MCF 10A (cell line): ENCODE measurements at regions of chr1 and their contacts with region 1.

Region 1: DNA sequence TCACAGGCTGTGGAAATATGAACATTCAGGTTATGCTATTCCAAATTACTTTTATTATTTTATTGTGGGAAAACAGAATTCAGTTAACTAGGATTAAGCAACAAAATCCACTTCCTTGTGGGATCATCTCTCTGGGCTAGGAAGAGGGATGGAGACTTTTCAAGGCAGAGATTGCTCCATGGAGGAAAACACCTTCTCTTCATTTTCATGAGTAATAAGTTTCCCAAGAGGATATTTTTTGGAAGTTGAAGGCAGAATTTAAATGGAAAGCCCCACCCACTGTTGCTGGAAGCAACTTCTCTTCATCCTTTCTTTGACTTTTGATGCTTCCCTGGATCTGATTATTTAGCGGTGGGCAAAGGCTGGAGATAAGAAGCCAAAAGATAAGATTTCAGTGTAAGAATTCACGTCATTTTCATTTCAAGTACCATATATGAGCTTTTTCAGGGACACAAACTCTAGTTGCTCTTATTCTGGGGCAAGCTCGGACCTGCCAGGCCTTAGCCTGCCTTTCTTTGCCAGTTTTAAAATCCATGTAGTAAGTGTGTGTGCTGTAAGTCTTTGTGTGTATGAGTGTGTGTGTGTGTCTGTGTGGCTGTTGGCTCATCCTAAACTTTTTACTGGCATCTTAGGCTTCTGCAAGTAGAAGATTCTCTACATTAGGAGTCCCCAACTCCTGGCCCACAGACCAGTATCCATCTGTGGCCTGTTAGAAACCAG is 11.7 kb upstream of the IL24 start:
- DNase-seq: peak; percentile 90
- H3K4me3 Mint-ChIP-seq: peak overlapping the region; percentile 5
- H3K27ac Mint-ChIP-seq: peak overlapping the region; percentile 58
- H3K4me1 Mint-ChIP-seq: peaks cover 66% of the 10 kb centered on the region
- H3K27me3 Mint-ChIP-seq: no peaks in the 10 kb centered on the region
- CTCF ChIP-seq: no peak

Region 2: DNA sequence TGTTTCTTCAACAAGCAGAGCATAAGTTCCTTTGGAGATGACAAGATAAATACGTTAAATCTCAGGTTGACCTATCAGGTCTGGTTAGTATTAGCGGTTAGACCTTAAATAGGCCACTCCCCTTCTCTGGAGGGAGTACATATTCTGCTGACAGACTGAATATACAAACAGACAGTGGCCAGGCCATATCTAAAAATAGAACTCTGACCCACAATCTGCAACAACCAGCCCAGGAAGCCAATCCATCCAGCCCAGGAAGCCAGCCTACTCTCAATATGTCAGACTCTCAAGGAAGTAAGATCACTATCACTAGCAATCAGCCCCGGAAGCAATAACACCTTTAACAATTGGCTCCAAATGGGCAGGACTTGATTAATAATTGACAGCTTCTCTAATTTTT is 13.4 kb before region 1 on chr1:
- CTCF ChIA-PET with region 1: interaction called, 16 read pairs
- POLR2A ChIA-PET with region 1: interaction called, 69 read pairs
- intact Hi-C with region 1: no loop called
- DNase-seq: no peak
- H3K4me3 Mint-ChIP-seq: no peak overlapping the region
- H3K27ac Mint-ChIP-seq: no peak overlapping the region
- H3K4me1 Mint-ChIP-seq: peaks cover 24% of the 10 kb centered on the region
- H3K27me3 Mint-ChIP-seq: no peaks in the 10 kb centered on the region
- CTCF ChIP-seq: no peak

Region 3: DNA sequence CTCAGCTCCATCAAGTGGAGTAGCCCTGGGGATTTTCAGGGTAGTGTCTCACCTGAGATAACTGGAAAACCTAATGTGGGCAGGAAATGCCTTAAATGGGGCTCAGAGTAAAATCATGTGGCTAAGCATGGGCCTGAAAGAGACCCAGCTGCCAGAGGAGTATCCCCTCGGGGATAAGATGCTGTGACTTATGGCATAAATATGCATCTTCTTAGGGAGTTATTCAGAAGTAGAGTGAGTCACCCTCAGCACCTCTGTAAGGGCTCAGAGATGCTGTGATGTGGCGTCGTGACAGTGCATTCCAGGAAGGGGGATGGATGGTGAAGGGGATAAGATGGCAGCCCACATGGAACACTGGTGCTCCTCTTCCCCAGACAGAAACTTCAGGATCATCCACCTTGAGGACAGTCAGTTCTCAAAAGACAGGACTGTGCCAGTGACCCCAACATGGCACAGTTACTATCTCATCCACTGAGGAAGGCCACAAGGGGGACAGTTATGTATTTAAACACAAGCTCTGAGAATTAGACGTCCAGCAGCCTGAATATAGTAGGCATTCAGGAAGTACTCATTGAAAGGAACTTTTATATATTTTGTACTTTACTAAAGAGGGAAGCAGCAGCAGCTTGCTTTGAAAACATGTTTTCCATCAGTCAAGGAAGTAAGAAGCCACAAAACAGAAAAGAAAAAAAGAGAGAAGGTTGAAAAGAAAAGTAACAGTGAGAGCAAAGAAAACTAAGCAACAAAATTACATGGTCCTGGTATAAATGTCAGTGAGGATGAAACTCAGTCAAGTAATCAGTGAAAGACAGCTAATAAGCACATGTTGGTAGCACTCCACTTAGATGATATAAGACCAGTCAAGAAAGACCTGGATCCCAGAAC is 20.0 kb after region 1 on chr1:
- CTCF ChIA-PET with region 1: interaction called, 53 read pairs
- POLR2A ChIA-PET with region 1: interaction called, 271 read pairs
- intact Hi-C with region 1: loop called (anchors 1 kb)
- DNase-seq: peak; percentile 97
- H3K4me3 Mint-ChIP-seq: no peak overlapping the region
- H3K27ac Mint-ChIP-seq: peak overlapping the region; percentile 22
- H3K4me1 Mint-ChIP-seq: peaks cover 51% of the 10 kb centered on the region
- H3K27me3 Mint-ChIP-seq: no peaks in the 10 kb centered on the region
- CTCF ChIP-seq: no peak